ENCODE measurements at regions of chr1 and their contacts with region 1.

Region 1: GRCh38 chr1:101288491-101288944 is 51.7 kb downstream of the S1PR1 start:
- DNase-seq: peak; percentile 91
- H3K4me3 ChIP-seq: no peak overlapping the region
- H3K27ac ChIP-seq: no peak overlapping the region
- H3K4me1 ChIP-seq: peaks cover 26% of the 10 kb centered on the region
- H3K27me3 ChIP-seq: no peaks in the 10 kb centered on the region

Region 2: GRCh38 chr1:100921109-100921706 is 367.3 kb before region 1 on chr1:
- in situ Hi-C with region 1: loop called (anchors 5 kb)
- DNase-seq: peak; percentile 65
- H3K4me3 ChIP-seq: no peak overlapping the region
- H3K27ac ChIP-seq: no peak overlapping the region
- H3K4me1 ChIP-seq: peaks cover 13% of the 10 kb centered on the region
- H3K27me3 ChIP-seq: no peaks in the 10 kb centered on the region

Region 3: GRCh38 chr1:101438359-101438758 is 149.8 kb after region 1 on chr1:
- in situ Hi-C with region 1: no loop called
- DNase-seq: peak; percentile 38
- H3K4me3 ChIP-seq: no peak overlapping the region
- H3K27ac ChIP-seq: no peak overlapping the region
- H3K4me1 ChIP-seq: no peaks in the 10 kb centered on the region
- H3K27me3 ChIP-seq: peaks cover 8% of the 10 kb centered on the region; the same call in 1 of the 2 replicates

Region 4: DNA sequence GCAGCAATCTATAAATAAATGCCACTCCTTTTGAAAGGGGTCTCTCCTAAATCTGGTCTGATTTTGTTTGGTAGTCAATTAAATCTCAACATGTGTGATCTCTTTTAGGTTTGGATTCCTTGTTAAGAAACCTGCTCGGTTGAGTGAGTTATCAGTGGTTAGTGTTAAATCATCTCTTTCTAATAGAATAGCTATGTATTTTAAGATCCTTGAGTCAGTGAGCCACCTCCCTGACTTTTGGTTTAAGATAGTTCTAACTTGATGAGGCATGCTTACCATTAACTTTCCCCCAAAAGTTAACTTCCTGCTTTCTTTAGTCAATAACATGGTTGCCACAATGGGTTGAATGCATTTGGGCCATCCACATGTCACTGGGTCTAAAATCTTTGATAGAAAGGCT is 801.3 kb after region 1 on chr1:
- in situ Hi-C with region 1: no loop called
- DNase-seq: no peak
- H3K4me3 ChIP-seq: no peak overlapping the region
- H3K27ac ChIP-seq: no peak overlapping the region
- H3K4me1 ChIP-seq: no peaks in the 10 kb centered on the region
- H3K27me3 ChIP-seq: no peaks in the 10 kb centered on the region